ENCODE measurements at regions of chr16 and their contacts with region 1.

Region 1: DNA sequence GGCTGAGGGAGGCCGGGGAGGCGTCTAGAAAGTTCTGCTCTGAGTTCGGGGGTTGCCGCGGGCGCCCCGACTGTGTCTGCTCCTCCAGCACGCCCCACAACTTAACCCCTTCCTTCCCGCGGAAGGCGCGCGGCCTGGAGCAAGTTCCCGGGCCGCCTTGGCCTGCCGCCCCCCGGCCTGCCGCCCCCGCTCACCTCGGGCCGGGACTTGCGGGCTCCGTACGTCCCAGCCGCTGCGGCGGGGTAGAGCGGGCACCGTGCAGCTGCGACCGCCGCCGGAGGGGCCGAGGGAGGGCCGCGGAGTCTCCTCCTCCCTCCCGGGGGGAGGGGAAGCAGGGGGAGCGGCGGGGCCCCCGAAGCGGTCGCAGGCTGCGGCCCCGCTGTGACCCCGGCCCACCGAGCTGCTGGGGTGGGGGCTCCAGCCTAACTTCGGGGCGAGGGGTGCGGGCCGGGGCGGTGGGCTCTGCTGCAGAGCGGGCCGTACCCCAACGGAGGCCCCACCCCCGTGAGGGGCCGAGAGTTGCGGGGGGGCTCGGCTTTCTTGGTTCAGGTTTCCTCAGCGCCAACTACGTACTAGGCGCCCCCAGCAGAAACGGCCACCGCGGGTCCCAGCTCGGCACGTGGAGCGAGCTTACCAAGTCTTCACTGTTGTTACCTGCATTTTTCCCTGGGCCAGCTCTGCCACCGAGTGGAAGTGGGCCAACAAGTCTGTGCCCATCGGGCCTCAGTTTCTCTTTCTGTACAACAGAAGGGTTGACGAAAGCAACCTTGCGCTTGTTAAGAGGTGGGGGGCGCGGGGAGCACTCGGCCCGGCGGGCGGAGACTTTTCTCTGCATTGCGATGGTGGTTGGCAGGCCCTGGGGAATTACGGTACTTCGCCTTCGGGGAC is at the start of gene CCDC102A:
- DNase-seq: peak in 21 of 35 experiments; percentile 23 to 82 (median 43)
- ATAC-seq: peak; percentile 20 to 56 (median 54)
- H3K4me3 ChIP-seq: peak within 1 kb of the TSS; percentile 68 to 84
- H3K4me3 Mint-ChIP-seq: peak within 1 kb of the TSS; percentile 84 to 86 (median 86)
- H3K27ac ChIP-seq: peak within 1 kb of the TSS; percentile 100
- H3K27ac Mint-ChIP-seq: peak within 1 kb of the TSS; percentile 88 to 96
- H3K4me1 ChIP-seq: peaks cover 32 to 87% of the 10 kb centered on the region in 2 experiments
- H3K4me1 Mint-ChIP-seq: peaks cover 61 to 75% (median 71%) of the 10 kb centered on the region in 3 donors
- H3K27me3 ChIP-seq: no peaks in the 10 kb centered on the region
- H3K27me3 Mint-ChIP-seq: no peaks in the 10 kb centered on the region
- total RNA-seq, gene CCDC102A: 6.1 to 11.2 (median 6.6) TPM

Region 2: GRCh38 chr16:57485916-57486857 is 50.4 kb before region 1 on chr16 and contains the start of gene DOK4:
- CTCF ChIA-PET with region 1: interaction called in 1 of 2 experiments, 11 read pairs
- POLR2A ChIA-PET with region 1: interaction called, 3 to 4 read pairs
- DNase-seq: peak; percentile 48 to 85 (median 70)
- ATAC-seq: peak; percentile 96 to 98 (median 98)
- H3K4me3 ChIP-seq: peak within 1 kb of the TSS; percentile 72 to 77
- H3K4me3 Mint-ChIP-seq: peak within 1 kb of the TSS; percentile 80 to 94 (median 83)
- H3K27ac ChIP-seq: no peak within 1 kb of the TSS
- H3K27ac Mint-ChIP-seq: peak within 1 kb of the TSS in 1 of 2 donors; percentile 69
- H3K4me1 ChIP-seq: peaks cover 0 to 25% of the 10 kb centered on the region in 2 experiments
- H3K4me1 Mint-ChIP-seq: peaks cover 17 to 26% (median 25%) of the 10 kb centered on the region in 3 donors
- H3K27me3 ChIP-seq: peaks cover 0 to 3% of the 10 kb centered on the region in 2 experiments
- H3K27me3 Mint-ChIP-seq: no peaks in the 10 kb centered on the region
- total RNA-seq, gene DOK4: 2.2 to 4.1 (median 3.1) TPM

Region 3: GRCh38 chr16:57795431-57795878 is 258.9 kb after region 1 on chr16:
- CTCF ChIA-PET with region 1: no interaction called
- POLR2A ChIA-PET with region 1: no interaction called
- DNase-seq: peak in 7 of 35 experiments; percentile 10 to 50 (median 21)
- ATAC-seq: peak in 3 of 4 experiments; percentile 43 to 50 (median 46)
- H3K4me3 ChIP-seq: no peak overlapping the region
- H3K4me3 Mint-ChIP-seq: no peak overlapping the region
- H3K27ac ChIP-seq: no peak overlapping the region
- H3K27ac Mint-ChIP-seq: no peak overlapping the region
- H3K4me1 ChIP-seq: peaks cover 0 to 13% of the 10 kb centered on the region in 2 experiments
- H3K4me1 Mint-ChIP-seq: peaks cover 17 to 20% (median 19%) of the 10 kb centered on the region in 3 donors
- H3K27me3 ChIP-seq: peaks cover 0 to 9% of the 10 kb centered on the region in 2 experiments
- H3K27me3 Mint-ChIP-seq: peaks cover 8 to 9% of the 10 kb centered on the region in 2 donors

Measured in T-cell (primary cell).